ENCODE measurements at regions of chr1 and their contacts with region 1.

Region 1: GRCh38 chr1:149886396-149887195 is 12.8 kb upstream of the BOLA1 start:
- DNase-seq: peak; percentile 91
- ATAC-seq: peak; percentile 60
- H3K4me3 Mint-ChIP-seq: no peak overlapping the region
- H3K27ac Mint-ChIP-seq: no peak overlapping the region
- H3K4me1 Mint-ChIP-seq: peaks cover 7% of the 10 kb centered on the region
- H3K27me3 Mint-ChIP-seq: no peaks in the 10 kb centered on the region

Region 2: DNA sequence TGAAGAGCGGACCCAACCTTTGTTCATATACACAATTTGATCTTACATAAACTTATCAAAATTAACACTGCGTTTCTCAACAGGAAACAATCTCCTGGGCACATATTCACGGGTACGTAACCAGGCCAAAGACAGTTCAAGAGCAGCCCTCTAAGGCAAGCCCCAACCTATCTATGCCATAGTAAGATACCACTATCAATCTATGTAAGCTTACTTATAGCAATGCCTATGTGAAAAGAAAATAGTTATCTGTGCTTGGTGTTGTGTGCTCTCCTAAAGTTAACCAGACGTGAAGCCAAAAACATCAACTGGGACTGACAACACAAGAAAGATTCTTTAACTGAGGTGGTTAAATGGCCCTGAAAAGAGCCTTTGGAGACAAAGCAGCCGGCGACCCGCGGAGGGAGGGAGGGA is 36.6 kb before region 1 on chr1:
- CTCF ChIA-PET with region 1: no interaction called
- POLR2A ChIA-PET with region 1: interaction called, 28 read pairs
- intact Hi-C with region 1: no loop called
- DNase-seq: peak; percentile 12
- ATAC-seq: no peak
- H3K4me3 Mint-ChIP-seq: peak overlapping the region; percentile 81
- H3K27ac Mint-ChIP-seq: peak overlapping the region; percentile 96
- H3K4me1 Mint-ChIP-seq: peaks cover 42% of the 10 kb centered on the region
- H3K27me3 Mint-ChIP-seq: no peaks in the 10 kb centered on the region

Region 3: GRCh38 chr1:149927503-149928387 is 41.1 kb after region 1 on chr1 and contains the start of gene SF3B4:
- CTCF ChIA-PET with region 1: interaction called, 6 read pairs
- POLR2A ChIA-PET with region 1: interaction called, 16 read pairs
- intact Hi-C with region 1: loop called (anchors 1 kb)
- DNase-seq: peak; percentile 97
- ATAC-seq: peak; percentile 97
- H3K4me3 Mint-ChIP-seq: peak within 1 kb of the TSS; percentile 97
- H3K27ac Mint-ChIP-seq: peak within 1 kb of the TSS; percentile 96
- H3K4me1 Mint-ChIP-seq: peaks cover 43% of the 10 kb centered on the region
- H3K27me3 Mint-ChIP-seq: peaks cover 3% of the 10 kb centered on the region
- total RNA-seq, gene SF3B4: 68.6 to 71.9 TPM

Region 4: DNA sequence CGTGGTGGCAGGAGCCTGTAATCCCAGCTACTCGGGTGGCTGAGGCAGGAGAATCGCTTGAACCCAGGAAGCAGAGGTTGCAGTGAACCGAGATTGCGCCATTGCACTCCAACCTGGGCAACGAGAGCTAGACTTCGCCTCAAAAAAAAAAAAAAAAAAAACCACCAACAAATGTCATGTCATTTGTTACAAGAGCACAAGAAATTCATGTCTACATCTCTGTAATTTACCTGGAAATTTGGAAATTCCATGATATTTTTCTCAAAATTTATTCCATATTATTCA is 164.4 kb after region 1 on chr1:
- CTCF ChIA-PET with region 1: interaction called, 5 read pairs
- POLR2A ChIA-PET with region 1: interaction called, 6 read pairs
- intact Hi-C with region 1: loop called (anchors 1 kb)
- DNase-seq: no peak
- ATAC-seq: no peak
- H3K4me3 Mint-ChIP-seq: no peak overlapping the region
- H3K27ac Mint-ChIP-seq: no peak overlapping the region
- H3K4me1 Mint-ChIP-seq: peaks cover 2% of the 10 kb centered on the region
- H3K27me3 Mint-ChIP-seq: peaks cover 3% of the 10 kb centered on the region

Region 5: GRCh38 chr1:150186789-150187559 is 300.4 kb after region 1 on chr1:
- CTCF ChIA-PET with region 1: interaction called, 6 read pairs
- POLR2A ChIA-PET with region 1: interaction called, 5 read pairs
- intact Hi-C with region 1: loop called in 1 of 2 experiments (anchors 1 kb)
- DNase-seq: peak; percentile 17
- ATAC-seq: peak; percentile 82
- H3K4me3 Mint-ChIP-seq: no peak overlapping the region
- H3K27ac Mint-ChIP-seq: peak overlapping the region; percentile 13
- H3K4me1 Mint-ChIP-seq: peaks cover 10% of the 10 kb centered on the region
- H3K27me3 Mint-ChIP-seq: no peaks in the 10 kb centered on the region